ENCODE measurements at regions of chr16 and their contacts with region 1.

Region 1: GRCh38 chr16:67561824-67562525 is 351 bp upstream of the CTCF start:
- DNase-seq: peak; percentile 98 to 99 (median 98)
- H3K4me3 ChIP-seq: peak overlapping the region; percentile 54 to 89 (median 75)
- H3K4me3 Mint-ChIP-seq: peak overlapping the region; percentile 82 to 91
- H3K27ac ChIP-seq: peak overlapping the region; percentile 75 to 89
- H3K27ac Mint-ChIP-seq: peak overlapping the region; percentile 83 to 94 (median 91)
- H3K4me1 ChIP-seq: peaks cover 29 to 37% of the 10 kb centered on the region in 2 donors
- H3K4me1 Mint-ChIP-seq: peaks cover 36% of the 10 kb centered on the region
- H3K27me3 ChIP-seq: no peaks in the 10 kb centered on the region
- H3K27me3 Mint-ChIP-seq: peaks cover 0 to 2% (median 0%) of the 10 kb centered on the region in 3 donors
- CTCF ChIP-seq: no peak

Region 2: GRCh38 chr16:67246934-67247697 is 314.9 kb before region 1 on chr16 and contains the start of gene FHOD1:
- intact Hi-C with region 1: loop called in 1 of 2 experiments (anchors 10 kb)
- DNase-seq: peak; percentile 93 to 95 (median 93)
- H3K4me3 ChIP-seq: peak within 1 kb of the TSS; percentile 71 to 97 (median 74)
- H3K4me3 Mint-ChIP-seq: peak within 1 kb of the TSS; percentile 92
- H3K27ac ChIP-seq: peak within 1 kb of the TSS; percentile 84 to 100
- H3K27ac Mint-ChIP-seq: peak within 1 kb of the TSS; percentile 82 to 100 (median 99)
- H3K4me1 ChIP-seq: peaks cover 57 to 64% of the 10 kb centered on the region in 2 donors
- H3K4me1 Mint-ChIP-seq: peaks cover 59% of the 10 kb centered on the region
- H3K27me3 ChIP-seq: peaks cover 24 to 32% of the 10 kb centered on the region in 2 donors
- H3K27me3 Mint-ChIP-seq: peaks cover 22 to 41% (median 30%) of the 10 kb centered on the region in 3 donors
- CTCF ChIP-seq: no peak
- polyA plus RNA-seq, gene FHOD1: 5.1 to 152 (median 5.5) TPM

Region 3: DNA sequence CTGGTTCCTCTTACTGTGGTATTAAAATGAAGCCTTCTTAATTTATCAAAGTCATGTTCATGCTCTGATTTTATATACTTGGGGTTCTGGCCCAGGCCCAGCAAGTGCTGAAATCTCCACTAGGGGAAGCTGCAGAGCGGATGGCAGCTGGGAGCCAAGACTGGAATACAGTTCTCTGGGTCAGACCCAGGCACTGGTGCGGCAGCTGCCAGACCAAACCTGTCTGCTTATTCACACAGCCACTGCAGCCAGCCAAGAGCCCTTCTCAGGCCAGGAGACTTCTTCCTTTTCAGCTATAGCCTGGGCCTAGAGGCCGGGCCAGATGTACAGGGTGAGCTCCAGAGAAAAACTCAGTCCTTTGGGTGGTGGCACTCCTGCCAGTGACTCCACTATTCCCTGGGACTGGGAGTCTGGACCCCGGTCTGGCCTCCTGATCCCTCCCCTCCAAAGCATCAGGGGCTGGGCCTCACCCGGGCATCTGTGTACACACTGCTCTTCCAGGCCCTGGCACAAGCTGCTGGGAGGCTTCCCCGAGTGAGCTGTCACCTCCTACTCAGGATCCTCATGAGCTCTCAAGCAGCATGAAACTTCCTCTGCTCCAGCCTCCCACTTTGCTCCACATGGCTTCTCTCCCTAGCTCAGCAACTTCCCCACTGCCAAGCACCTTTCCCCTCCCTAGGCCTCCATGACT is 105.4 kb before region 1 on chr16:
- intact Hi-C with region 1: no loop called
- DNase-seq: no peak
- H3K4me3 ChIP-seq: no peak overlapping the region
- H3K4me3 Mint-ChIP-seq: no peak overlapping the region
- H3K27ac ChIP-seq: peak overlapping the region in 1 of 2 donors; percentile 18
- H3K27ac Mint-ChIP-seq: peak overlapping the region in 4 of 7 donors; percentile 19 to 80 (median 68)
- H3K4me1 ChIP-seq: peaks cover 10 to 22% of the 10 kb centered on the region in 2 donors
- H3K4me1 Mint-ChIP-seq: peaks cover 23% of the 10 kb centered on the region
- H3K27me3 ChIP-seq: no peaks in the 10 kb centered on the region
- H3K27me3 Mint-ChIP-seq: no peaks in the 10 kb centered on the region
- CTCF ChIP-seq: peak; percentile 57

Region 4: GRCh38 chr16:67521095-67521804 is 40.7 kb before region 1 on chr16:
- intact Hi-C with region 1: loop called (anchors 5 kb)
- DNase-seq: peak; percentile 98
- H3K4me3 ChIP-seq: peak overlapping the region; percentile 47 to 75 (median 49)
- H3K4me3 Mint-ChIP-seq: peak overlapping the region; percentile 82 to 91
- H3K27ac ChIP-seq: peak overlapping the region; percentile 99
- H3K27ac Mint-ChIP-seq: peak overlapping the region; percentile 99 to 100 (median 100)
- H3K4me1 ChIP-seq: peaks cover 40 to 44% of the 10 kb centered on the region in 2 donors
- H3K4me1 Mint-ChIP-seq: peaks cover 45% of the 10 kb centered on the region
- H3K27me3 ChIP-seq: no peaks in the 10 kb centered on the region
- H3K27me3 Mint-ChIP-seq: peaks cover 6 to 16% (median 10%) of the 10 kb centered on the region in 3 donors
- CTCF ChIP-seq: peak; percentile 93

Region 5: GRCh38 chr16:67546761-67547422 is 15.1 kb before region 1 on chr16:
- intact Hi-C with region 1: loop called in 1 of 2 experiments (anchors 2 kb)
- DNase-seq: peak; percentile 67 to 78 (median 76)
- H3K4me3 ChIP-seq: no peak overlapping the region
- H3K4me3 Mint-ChIP-seq: no peak overlapping the region
- H3K27ac ChIP-seq: peak overlapping the region; percentile 8 to 61
- H3K27ac Mint-ChIP-seq: peak overlapping the region; percentile 22 to 90 (median 83)
- H3K4me1 ChIP-seq: peaks cover 21 to 33% of the 10 kb centered on the region in 2 donors
- H3K4me1 Mint-ChIP-seq: peaks cover 34% of the 10 kb centered on the region
- H3K27me3 ChIP-seq: no peaks in the 10 kb centered on the region
- H3K27me3 Mint-ChIP-seq: peaks cover 0 to 3% (median 1%) of the 10 kb centered on the region in 3 donors
- CTCF ChIP-seq: peak; percentile 98

Region 6: GRCh38 chr16:67667817-67668494 is 106.0 kb after region 1 on chr16:
- intact Hi-C with region 1: loop called in 1 of 2 experiments (anchors 5 kb)
- DNase-seq: peak; percentile 85 to 87 (median 86)
- H3K4me3 ChIP-seq: peak overlapping the region in 2 of 3 experiments; percentile 62 to 96
- H3K4me3 Mint-ChIP-seq: peak overlapping the region; percentile 88 to 96
- H3K27ac ChIP-seq: peak overlapping the region; percentile 65 to 83
- H3K27ac Mint-ChIP-seq: peak overlapping the region in 5 of 7 donors; percentile 91 to 94 (median 91)
- H3K4me1 ChIP-seq: peaks cover 34 to 43% of the 10 kb centered on the region in 2 donors
- H3K4me1 Mint-ChIP-seq: peaks cover 35% of the 10 kb centered on the region
- H3K27me3 ChIP-seq: no peaks in the 10 kb centered on the region
- H3K27me3 Mint-ChIP-seq: peaks cover 0 to 2% (median 0%) of the 10 kb centered on the region in 3 donors
- CTCF ChIP-seq: peak; percentile 89

Measured in CD14-positive monocyte (primary cell).